Natural killer cell (primary cell): ENCODE measurements at regions of chr3 and their contacts with region 1.

Region 1: DNA sequence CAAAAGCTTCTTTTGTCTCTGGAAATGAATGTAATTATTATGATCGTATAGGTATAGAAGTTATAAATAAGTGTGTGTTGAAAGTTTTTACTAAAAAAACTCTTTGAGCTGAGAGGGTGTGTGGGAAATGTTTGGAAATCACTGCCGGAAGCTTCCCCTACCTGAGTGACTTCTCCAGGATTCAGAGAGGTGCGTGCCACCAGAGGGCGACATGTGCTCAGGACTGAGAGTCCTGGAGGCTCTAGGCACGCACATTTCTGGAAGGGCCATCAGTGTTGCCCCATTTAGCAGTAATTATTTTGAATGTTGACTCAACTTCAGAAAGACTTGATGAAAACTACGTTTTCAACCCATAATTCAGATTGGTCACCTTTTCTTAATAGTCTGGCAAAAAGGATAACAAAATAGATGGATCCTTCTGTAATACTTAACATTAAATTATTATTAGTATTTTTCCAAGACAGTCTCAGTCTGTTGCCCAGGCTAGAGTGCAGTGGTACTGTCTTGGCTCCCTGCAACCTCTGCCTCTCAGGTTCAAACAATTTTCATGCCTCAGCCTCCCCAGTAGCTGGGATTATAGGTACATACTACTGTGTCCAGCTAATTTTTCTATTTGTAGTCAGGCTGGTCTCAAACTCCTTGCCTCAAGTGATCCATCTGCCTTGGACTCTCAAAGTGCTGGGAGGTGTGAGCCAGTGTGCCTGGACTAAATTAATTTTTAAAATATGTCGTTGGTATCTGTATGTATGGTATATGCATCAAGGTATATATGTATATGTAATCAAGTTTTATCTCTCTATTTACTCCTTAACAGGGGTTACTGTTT is 34.5 kb downstream of the GPR171 start:
- DNase-seq: peak; percentile 65 to 89
- ATAC-seq: peak; percentile 71 to 86 (median 79)
- H3K4me3 ChIP-seq: no peak overlapping the region
- H3K4me3 Mint-ChIP-seq: no peak overlapping the region
- H3K27ac ChIP-seq: no peak overlapping the region
- H3K27ac Mint-ChIP-seq: no peak overlapping the region
- H3K4me1 ChIP-seq: peaks cover 32% of the 10 kb centered on the region
- H3K4me1 Mint-ChIP-seq: peaks cover 24 to 30% of the 10 kb centered on the region in 2 donors
- H3K27me3 ChIP-seq: no peaks in the 10 kb centered on the region
- H3K27me3 Mint-ChIP-seq: no peaks in the 10 kb centered on the region
- CTCF ChIP-seq: peak; percentile 84

Region 2: DNA sequence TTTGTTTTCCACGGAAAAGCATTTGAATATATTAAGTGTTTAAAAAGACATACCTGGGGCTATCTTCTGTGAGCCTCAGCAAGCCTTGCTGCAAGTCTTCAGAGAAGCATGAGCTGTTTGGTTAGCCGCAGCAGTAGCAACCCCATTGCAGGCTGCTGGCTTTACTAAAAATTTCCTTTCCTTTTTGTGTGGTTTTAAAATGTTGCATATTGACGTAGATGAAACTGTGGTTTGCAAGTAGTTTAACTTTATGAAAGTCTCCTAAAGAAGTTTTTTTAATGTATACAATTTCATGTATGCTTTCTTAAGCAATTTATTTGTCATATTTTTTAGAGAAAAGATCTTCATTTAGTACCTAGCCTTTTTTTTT is 34.6 kb after region 1 on chr3 and contains the start of gene GPR171:
- intact Hi-C with region 1: loop called (anchors 2 kb)
- DNase-seq: peak; percentile 24 to 88
- ATAC-seq: peak; percentile 76 to 96 (median 89)
- H3K4me3 ChIP-seq: peak within 1 kb of the TSS; percentile 33
- H3K4me3 Mint-ChIP-seq: peak within 1 kb of the TSS; percentile 67
- H3K27ac ChIP-seq: peak within 1 kb of the TSS; percentile 72
- H3K27ac Mint-ChIP-seq: peak within 1 kb of the TSS; percentile 78 to 84
- H3K4me1 ChIP-seq: peaks cover 15% of the 10 kb centered on the region
- H3K4me1 Mint-ChIP-seq: peaks cover 48 to 49% of the 10 kb centered on the region in 2 donors
- H3K27me3 ChIP-seq: no peaks in the 10 kb centered on the region
- H3K27me3 Mint-ChIP-seq: no peaks in the 10 kb centered on the region
- CTCF ChIP-seq: no peak
- total RNA-seq, gene GPR171: 3.4 to 9.0 (median 8.2) TPM

Region 3: GRCh38 chr3:151227807-151228665 is 59.6 kb after region 1 on chr3:
- intact Hi-C with region 1: loop called (anchors 1 kb)
- DNase-seq: peak; percentile 69 to 91
- ATAC-seq: peak; percentile 80 to 88 (median 82)
- H3K4me3 ChIP-seq: no peak overlapping the region
- H3K4me3 Mint-ChIP-seq: no peak overlapping the region
- H3K27ac ChIP-seq: peak overlapping the region; percentile 6
- H3K27ac Mint-ChIP-seq: peak overlapping the region; percentile 25 to 28
- H3K4me1 ChIP-seq: peaks cover 26% of the 10 kb centered on the region
- H3K4me1 Mint-ChIP-seq: peaks cover 50 to 52% of the 10 kb centered on the region in 2 donors
- H3K27me3 ChIP-seq: no peaks in the 10 kb centered on the region
- H3K27me3 Mint-ChIP-seq: peaks cover 0 to 2% of the 10 kb centered on the region in 2 donors
- CTCF ChIP-seq: peak; percentile 94

Region 4: GRCh38 chr3:151282921-151283320 is 114.4 kb after region 1 on chr3:
- intact Hi-C with region 1: loop called (anchors 1 kb)
- DNase-seq: peak in 1 of 2 donors; percentile 81
- ATAC-seq: peak; percentile 71 to 82 (median 77)
- H3K4me3 ChIP-seq: no peak overlapping the region
- H3K4me3 Mint-ChIP-seq: no peak overlapping the region
- H3K27ac ChIP-seq: no peak overlapping the region
- H3K27ac Mint-ChIP-seq: no peak overlapping the region
- H3K4me1 ChIP-seq: peaks cover 3% of the 10 kb centered on the region
- H3K4me1 Mint-ChIP-seq: peaks cover 8 to 11% of the 10 kb centered on the region in 2 donors
- H3K27me3 ChIP-seq: no peaks in the 10 kb centered on the region
- H3K27me3 Mint-ChIP-seq: peaks cover 0 to 2% of the 10 kb centered on the region in 2 donors
- CTCF ChIP-seq: peak; percentile 80

Region 5: GRCh38 chr3:151452841-151453240 is 284.4 kb after region 1 on chr3:
- intact Hi-C with region 1: no loop called
- DNase-seq: no peak
- ATAC-seq: no peak
- H3K4me3 ChIP-seq: no peak overlapping the region
- H3K4me3 Mint-ChIP-seq: no peak overlapping the region
- H3K27ac ChIP-seq: no peak overlapping the region
- H3K27ac Mint-ChIP-seq: no peak overlapping the region
- H3K4me1 ChIP-seq: no peaks in the 10 kb centered on the region
- H3K4me1 Mint-ChIP-seq: peaks cover 0 to 4% of the 10 kb centered on the region in 2 donors
- H3K27me3 ChIP-seq: no peaks in the 10 kb centered on the region
- H3K27me3 Mint-ChIP-seq: peaks cover 0 to 6% of the 10 kb centered on the region in 2 donors
- CTCF ChIP-seq: no peak